ENCODE measurements at regions of chr21 and their contacts with region 1.

Region 1: GRCh38 chr21:28745131-28746016 is 247.3 kb downstream of the LTN1 start:
- DNase-seq: peak; percentile 80
- H3K4me3 Mint-ChIP-seq: no peak overlapping the region
- H3K27ac Mint-ChIP-seq: no peak overlapping the region
- H3K4me1 Mint-ChIP-seq: no peaks in the 10 kb centered on the region
- H3K27me3 Mint-ChIP-seq: no peaks in the 10 kb centered on the region

Region 2: GRCh38 chr21:26842976-26843932 is 1902.1 kb before region 1 on chr21:
- CTCF ChIA-PET with region 1: interaction called, 26 read pairs
- POLR2A ChIA-PET with region 1: no interaction called
- intact Hi-C with region 1: no loop called
- DNase-seq: peak; percentile 29
- H3K4me3 Mint-ChIP-seq: peak overlapping the region; percentile 49
- H3K27ac Mint-ChIP-seq: no peak overlapping the region
- H3K4me1 Mint-ChIP-seq: peaks cover 28% of the 10 kb centered on the region
- H3K27me3 Mint-ChIP-seq: peaks cover 60% of the 10 kb centered on the region

Region 3: DNA sequence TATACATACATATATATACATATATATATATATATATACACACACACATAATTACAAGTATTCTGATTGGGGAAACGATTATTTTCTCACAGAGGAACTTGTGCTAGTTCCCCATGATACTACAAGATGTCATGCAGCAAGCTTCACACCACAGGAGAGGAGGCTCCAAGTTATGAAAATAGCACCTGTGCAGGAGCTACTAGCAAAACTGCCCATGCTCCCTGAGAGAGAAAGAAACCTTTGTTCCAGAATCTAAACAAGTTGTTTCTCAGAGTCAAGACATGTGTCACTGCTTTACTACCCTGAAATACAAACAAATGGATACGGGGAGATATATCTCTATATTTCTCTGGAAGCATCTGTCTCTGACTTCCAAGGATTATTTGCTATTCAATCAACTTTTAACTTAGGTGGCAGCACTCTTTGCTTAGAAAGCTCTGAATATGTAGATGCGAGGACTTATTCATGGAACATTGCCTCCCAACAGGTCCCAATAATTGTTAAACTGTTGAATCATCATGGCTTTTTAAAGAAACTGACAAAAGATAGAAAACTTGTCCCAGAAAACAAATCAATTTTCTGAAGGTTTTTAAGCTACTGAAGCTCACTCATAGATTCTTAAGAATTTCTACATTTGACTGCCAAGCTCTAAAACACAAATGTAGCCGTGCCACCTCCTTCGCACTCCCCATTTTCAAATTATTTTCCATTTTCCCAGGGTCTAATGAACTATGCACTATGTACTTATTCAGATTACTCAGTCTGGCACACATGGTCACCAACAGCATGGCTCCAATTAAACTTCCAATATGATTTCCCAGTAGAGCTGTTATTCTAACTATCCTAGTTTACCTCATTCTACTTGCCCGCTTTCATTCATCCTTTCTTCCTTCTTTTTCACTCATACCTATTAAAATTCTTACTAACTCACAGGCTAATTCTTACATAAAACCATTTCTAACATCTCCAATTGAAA is 681.8 kb before region 1 on chr21:
- CTCF ChIA-PET with region 1: no interaction called
- POLR2A ChIA-PET with region 1: no interaction called
- intact Hi-C with region 1: loop called (anchors 10 kb)
- DNase-seq: no peak
- H3K4me3 Mint-ChIP-seq: no peak overlapping the region
- H3K27ac Mint-ChIP-seq: no peak overlapping the region
- H3K4me1 Mint-ChIP-seq: no peaks in the 10 kb centered on the region
- H3K27me3 Mint-ChIP-seq: no peaks in the 10 kb centered on the region

Region 4: GRCh38 chr21:28522014-28522799 is 223.2 kb before region 1 on chr21:
- CTCF ChIA-PET with region 1: interaction called, 248 read pairs
- POLR2A ChIA-PET with region 1: interaction called, 3 read pairs
- intact Hi-C with region 1: loop called (anchors 1 kb)
- DNase-seq: peak; percentile 16
- H3K4me3 Mint-ChIP-seq: no peak overlapping the region
- H3K27ac Mint-ChIP-seq: no peak overlapping the region
- H3K4me1 Mint-ChIP-seq: no peaks in the 10 kb centered on the region
- H3K27me3 Mint-ChIP-seq: no peaks in the 10 kb centered on the region

Region 5: DNA sequence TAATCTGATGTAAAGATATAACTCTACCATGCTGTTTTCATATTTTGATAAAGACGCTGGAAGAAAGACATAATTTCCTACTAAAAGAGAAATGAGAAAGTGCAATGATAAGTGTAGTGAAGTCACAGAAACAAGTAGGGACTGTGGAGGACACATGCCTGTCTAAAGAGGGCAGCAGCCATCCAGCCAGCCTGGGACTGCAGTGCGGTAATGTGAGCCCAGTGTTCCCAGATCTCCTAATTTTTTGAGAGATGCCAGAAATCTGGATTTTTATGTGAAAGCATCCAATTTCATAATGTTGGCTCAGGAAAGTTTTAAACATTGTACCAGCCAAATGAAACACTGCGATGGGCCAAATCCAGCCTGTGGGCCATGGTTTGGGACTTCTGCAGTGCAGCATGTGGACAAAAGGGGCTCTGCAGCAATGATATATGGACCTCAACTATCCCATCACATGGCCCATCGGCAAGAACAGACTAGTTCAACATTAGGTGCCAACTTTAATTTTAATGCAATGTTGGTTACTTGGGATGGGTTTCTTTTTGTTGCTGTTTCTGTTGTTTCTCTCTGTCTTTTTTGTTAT is 82.2 kb before region 1 on chr21:
- CTCF ChIA-PET with region 1: interaction called, 10 read pairs
- POLR2A ChIA-PET with region 1: no interaction called
- intact Hi-C with region 1: no loop called
- DNase-seq: no peak
- H3K4me3 Mint-ChIP-seq: no peak overlapping the region
- H3K27ac Mint-ChIP-seq: no peak overlapping the region
- H3K4me1 Mint-ChIP-seq: no peaks in the 10 kb centered on the region
- H3K27me3 Mint-ChIP-seq: no peaks in the 10 kb centered on the region

Region 6: GRCh38 chr21:28761674-28762356 is 16.4 kb after region 1 on chr21:
- CTCF ChIA-PET with region 1: interaction called, 40 read pairs
- POLR2A ChIA-PET with region 1: no interaction called
- intact Hi-C with region 1: no loop called
- DNase-seq: no peak
- H3K4me3 Mint-ChIP-seq: no peak overlapping the region
- H3K27ac Mint-ChIP-seq: no peak overlapping the region
- H3K4me1 Mint-ChIP-seq: peaks cover 1% of the 10 kb centered on the region
- H3K27me3 Mint-ChIP-seq: no peaks in the 10 kb centered on the region

Region 7: GRCh38 chr21:28884976-28885852 is 139.8 kb after region 1 on chr21:
- CTCF ChIA-PET with region 1: interaction called, 17 read pairs
- POLR2A ChIA-PET with region 1: no interaction called
- intact Hi-C with region 1: no loop called
- DNase-seq: peak; percentile 95
- H3K4me3 Mint-ChIP-seq: peak overlapping the region; percentile 89
- H3K27ac Mint-ChIP-seq: peak overlapping the region; percentile 99
- H3K4me1 Mint-ChIP-seq: peaks cover 14% of the 10 kb centered on the region
- H3K27me3 Mint-ChIP-seq: peaks cover 4% of the 10 kb centered on the region

Measured in activated CD4-positive, alpha-beta memory T cell treated with anti-CD3 and anti-CD28 coated beads for 36 hours (primary cell).